Mammary epithelial cell (primary cell): ENCODE measurements at regions of chr5 and their contacts with region 1.

Region 1: GRCh38 chr5:150486402-150487198 is 21.3 kb upstream of the NDST1 start:
- DNase-seq: peak; percentile 68
- H3K4me3 ChIP-seq: peak overlapping the region; percentile 71 to 91 (median 89)
- H3K27ac ChIP-seq: peak overlapping the region; percentile 44
- H3K4me1 ChIP-seq: peaks cover 51% of the 10 kb centered on the region
- H3K27me3 ChIP-seq: no peaks in the 10 kb centered on the region
- CTCF ChIP-seq: no peak

Region 2: GRCh38 chr5:150469718-150470469 is 16.7 kb before region 1 on chr5:
- CTCF ChIA-PET with region 1: no interaction called
- dilution Hi-C with region 1: no loop called
- in situ Hi-C with region 1: no loop called
- intact Hi-C with region 1: loop called (anchors 1 kb)
- DNase-seq: peak; percentile 80
- H3K4me3 ChIP-seq: no peak overlapping the region
- H3K27ac ChIP-seq: no peak overlapping the region
- H3K4me1 ChIP-seq: peaks cover 38% of the 10 kb centered on the region
- H3K27me3 ChIP-seq: no peaks in the 10 kb centered on the region
- CTCF ChIP-seq: no peak

Region 3: DNA sequence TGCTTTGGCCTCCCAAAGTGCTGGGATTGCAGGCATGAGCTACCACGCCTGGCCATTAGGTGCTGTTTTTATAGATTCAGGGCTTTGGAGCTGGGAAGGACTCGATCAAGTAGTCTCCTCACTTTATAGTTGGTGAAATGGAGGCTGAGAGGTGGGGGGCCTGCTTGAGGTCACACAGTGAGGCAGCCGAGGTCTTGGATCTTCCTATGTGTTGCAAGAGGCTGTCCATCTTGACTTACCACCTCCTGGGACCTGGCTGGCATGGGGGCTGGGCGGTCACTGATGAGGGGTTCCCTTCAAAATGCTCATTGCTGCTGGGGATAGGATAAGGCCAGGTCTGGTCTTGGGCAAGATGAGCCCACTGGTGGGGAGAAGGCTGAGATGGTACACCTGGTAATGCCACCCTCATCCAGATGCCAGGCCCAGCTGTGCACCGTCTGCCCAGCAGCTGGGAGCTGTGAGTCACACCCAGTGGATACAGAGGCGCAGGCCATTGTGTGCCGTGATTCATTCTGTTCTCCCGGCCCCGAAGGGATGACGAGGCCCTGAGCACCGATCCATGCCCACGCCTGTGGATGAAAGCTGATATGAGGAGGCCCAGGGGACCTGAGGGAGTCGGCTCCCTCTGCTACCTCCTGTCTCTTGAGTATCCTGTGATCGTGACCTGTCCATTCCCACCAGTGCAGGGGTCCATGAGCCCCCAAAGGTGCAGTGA is 10.8 kb after region 1 on chr5:
- CTCF ChIA-PET with region 1: interaction called, 12 read pairs
- dilution Hi-C with region 1: no loop called
- in situ Hi-C with region 1: no loop called
- intact Hi-C with region 1: no loop called
- DNase-seq: peak; percentile 96
- H3K4me3 ChIP-seq: peak overlapping the region; percentile 22 to 41 (median 35)
- H3K27ac ChIP-seq: peak overlapping the region; percentile 77
- H3K4me1 ChIP-seq: peaks cover 71% of the 10 kb centered on the region
- H3K27me3 ChIP-seq: no peaks in the 10 kb centered on the region
- CTCF ChIP-seq: no peak

Region 4: GRCh38 chr5:150517272-150518152 is 30.9 kb after region 1 on chr5:
- CTCF ChIA-PET with region 1: no interaction called
- dilution Hi-C with region 1: no loop called
- in situ Hi-C with region 1: no loop called
- intact Hi-C with region 1: loop called (anchors 1 kb)
- DNase-seq: peak; percentile 94
- H3K4me3 ChIP-seq: no peak overlapping the region
- H3K27ac ChIP-seq: peak overlapping the region; percentile 26
- H3K4me1 ChIP-seq: peaks cover 50% of the 10 kb centered on the region
- H3K27me3 ChIP-seq: no peaks in the 10 kb centered on the region
- CTCF ChIP-seq: no peak

Region 5: GRCh38 chr5:150523472-150524350 is 37.1 kb after region 1 on chr5:
- CTCF ChIA-PET with region 1: no interaction called
- dilution Hi-C with region 1: no loop called
- in situ Hi-C with region 1: no loop called
- intact Hi-C with region 1: loop called (anchors 1 kb)
- DNase-seq: peak; percentile 39
- H3K4me3 ChIP-seq: no peak overlapping the region
- H3K27ac ChIP-seq: no peak overlapping the region
- H3K4me1 ChIP-seq: peaks cover 42% of the 10 kb centered on the region
- H3K27me3 ChIP-seq: no peaks in the 10 kb centered on the region
- CTCF ChIP-seq: peak; percentile 44 to 59

Region 6: GRCh38 chr5:150544611-150545219 is 58.1 kb after region 1 on chr5:
- CTCF ChIA-PET with region 1: interaction called, 3 read pairs
- dilution Hi-C with region 1: no loop called
- in situ Hi-C with region 1: loop called in 1 of 2 experiments (anchors 10 kb)
- intact Hi-C with region 1: loop called (anchors 1 kb)
- DNase-seq: peak; percentile 44
- H3K4me3 ChIP-seq: no peak overlapping the region
- H3K27ac ChIP-seq: no peak overlapping the region
- H3K4me1 ChIP-seq: peaks cover 27% of the 10 kb centered on the region
- H3K27me3 ChIP-seq: no peaks in the 10 kb centered on the region
- CTCF ChIP-seq: peak; percentile 74 to 94